ENCODE measurements at regions of chr19 and their contacts with region 1.

Region 1: DNA sequence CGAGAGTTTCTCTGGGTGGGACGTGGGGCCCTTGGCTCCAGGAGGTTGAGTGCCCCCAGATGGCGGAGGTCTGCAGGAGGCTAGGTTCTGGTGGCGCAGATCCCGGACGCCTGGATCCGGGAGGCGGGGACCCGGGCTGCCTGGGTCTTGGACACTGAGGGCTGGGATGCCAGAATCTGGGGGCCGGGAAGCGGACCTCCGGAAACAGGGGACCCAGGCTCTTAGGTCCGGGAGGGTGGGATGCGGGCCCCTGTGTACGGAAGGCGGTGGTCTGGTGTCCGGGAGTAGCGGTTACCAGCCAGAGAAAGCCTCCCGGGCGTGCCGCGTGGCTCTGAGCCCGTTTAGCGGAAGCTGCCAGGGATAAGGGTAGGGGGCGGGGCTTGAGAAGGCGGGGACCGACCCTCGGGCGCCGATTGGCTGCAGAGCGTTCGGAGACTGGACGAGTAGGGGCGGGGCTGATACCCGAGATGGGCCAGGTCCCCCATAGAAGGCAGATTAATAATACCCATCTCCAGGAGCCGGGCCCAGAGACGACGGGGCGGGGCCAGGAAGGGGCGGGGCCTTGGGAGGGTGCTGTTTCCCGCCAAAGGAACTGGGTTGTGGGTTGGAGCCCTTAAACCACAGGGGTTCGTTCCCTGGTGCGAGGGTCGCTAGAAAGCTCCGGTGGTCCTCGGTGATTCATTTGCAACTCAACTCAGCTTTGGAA is at the start of gene SLC1A5:
- DNase-seq: peak; percentile 99
- ATAC-seq: peak; percentile 83
- H3K4me3 Mint-ChIP-seq: peak within 1 kb of the TSS; percentile 98
- H3K27ac Mint-ChIP-seq: peak within 1 kb of the TSS; percentile 98
- H3K4me1 Mint-ChIP-seq: peaks cover 29% of the 10 kb centered on the region
- H3K27me3 Mint-ChIP-seq: no peaks in the 10 kb centered on the region
- CTCF ChIP-seq: no peak
- total RNA-seq, gene SLC1A5: 235 TPM

Region 2: DNA sequence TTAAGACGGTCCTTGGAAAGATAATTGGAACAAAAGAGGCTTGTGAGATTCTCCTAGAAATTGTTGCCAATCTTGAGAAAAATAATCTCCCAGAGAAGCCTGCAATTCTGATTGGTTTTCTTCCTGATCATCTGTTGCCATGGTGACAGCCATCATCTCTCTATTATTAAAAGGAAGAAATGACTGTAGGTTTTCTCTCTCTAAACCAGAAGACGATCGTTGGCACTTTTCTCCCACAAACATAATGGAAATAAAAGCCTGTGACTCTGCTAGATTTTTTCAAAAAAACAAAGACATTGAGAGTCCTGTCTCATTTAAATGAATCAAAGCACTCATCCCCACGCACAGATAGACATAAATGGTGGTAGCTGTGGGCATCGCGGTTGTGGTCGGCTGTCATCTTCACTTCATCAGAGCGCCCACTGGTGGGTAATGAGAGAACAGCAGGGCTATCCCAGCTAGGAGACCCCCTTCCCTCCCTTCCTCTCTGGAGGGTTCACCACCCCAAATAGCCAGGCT is 209.0 kb before region 1 on chr19:
- CTCF ChIA-PET with region 1: no interaction called
- POLR2A ChIA-PET with region 1: no interaction called
- intact Hi-C with region 1: no loop called
- DNase-seq: peak; percentile 76
- ATAC-seq: peak; percentile 47
- H3K4me3 Mint-ChIP-seq: no peak overlapping the region
- H3K27ac Mint-ChIP-seq: no peak overlapping the region
- H3K4me1 Mint-ChIP-seq: peaks cover 18% of the 10 kb centered on the region
- H3K27me3 Mint-ChIP-seq: no peaks in the 10 kb centered on the region
- CTCF ChIP-seq: peak; percentile 56

Region 3: GRCh38 chr19:46717034-46717723 is 71.2 kb before region 1 on chr19 and contains the start of gene PRKD2:
- CTCF ChIA-PET with region 1: no interaction called
- POLR2A ChIA-PET with region 1: interaction called, 27 read pairs
- intact Hi-C with region 1: no loop called
- DNase-seq: peak; percentile 92
- ATAC-seq: peak; percentile 62
- H3K4me3 Mint-ChIP-seq: peak within 1 kb of the TSS; percentile 86
- H3K27ac Mint-ChIP-seq: peak within 1 kb of the TSS; percentile 94
- H3K4me1 Mint-ChIP-seq: peaks cover 38% of the 10 kb centered on the region
- H3K27me3 Mint-ChIP-seq: no peaks in the 10 kb centered on the region
- CTCF ChIP-seq: no peak
- total RNA-seq, gene PRKD2: 81.1 to 86.0 TPM

Region 4: DNA sequence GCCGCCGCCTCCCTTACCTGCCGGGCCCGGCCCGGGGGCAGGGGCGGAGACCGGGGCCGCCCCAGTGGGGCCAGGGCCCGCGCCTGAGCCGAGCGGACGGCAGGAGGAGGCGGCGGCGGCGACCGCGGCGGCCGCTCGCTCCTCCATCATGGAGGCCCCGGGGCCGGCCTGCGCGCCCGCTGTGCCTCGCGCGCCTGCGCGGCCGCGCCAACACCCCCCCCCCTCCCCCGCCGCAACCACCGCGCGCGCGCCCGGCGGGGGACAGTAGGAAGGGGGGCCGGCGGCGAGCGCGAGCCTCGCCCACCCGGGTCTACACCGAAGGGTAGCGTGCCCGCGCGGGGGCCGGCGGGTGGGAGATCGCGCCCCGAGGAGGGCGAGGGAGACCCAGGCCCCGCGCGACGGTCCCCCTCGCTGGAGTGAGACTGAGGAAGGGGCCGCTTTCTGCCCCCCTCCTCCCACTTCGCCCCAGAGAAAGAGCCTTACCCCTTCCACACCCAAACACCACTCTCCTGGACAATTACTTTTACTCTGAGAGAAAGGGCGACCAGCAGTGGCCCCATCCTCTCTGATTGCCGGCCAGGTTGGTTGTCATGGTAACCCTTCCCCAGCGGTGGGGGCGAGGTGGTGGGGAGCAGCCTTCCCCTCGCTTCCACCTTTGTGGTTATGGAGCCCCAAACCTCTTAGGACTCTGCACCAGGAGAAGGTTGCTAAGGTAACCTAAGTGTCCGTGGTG is 42.0 kb before region 1 on chr19 and contains the start of gene STRN4:
- CTCF ChIA-PET with region 1: interaction called, 12 read pairs
- POLR2A ChIA-PET with region 1: interaction called, 4 read pairs
- intact Hi-C with region 1: no loop called
- DNase-seq: peak; percentile 63
- ATAC-seq: peak; percentile 81
- H3K4me3 Mint-ChIP-seq: peak within 1 kb of the TSS; percentile 91
- H3K27ac Mint-ChIP-seq: peak within 1 kb of the TSS; percentile 88
- H3K4me1 Mint-ChIP-seq: peaks cover 47% of the 10 kb centered on the region
- H3K27me3 Mint-ChIP-seq: no peaks in the 10 kb centered on the region
- CTCF ChIP-seq: no peak
- total RNA-seq, gene STRN4: 52.5 to 63.5 TPM

Region 5: DNA sequence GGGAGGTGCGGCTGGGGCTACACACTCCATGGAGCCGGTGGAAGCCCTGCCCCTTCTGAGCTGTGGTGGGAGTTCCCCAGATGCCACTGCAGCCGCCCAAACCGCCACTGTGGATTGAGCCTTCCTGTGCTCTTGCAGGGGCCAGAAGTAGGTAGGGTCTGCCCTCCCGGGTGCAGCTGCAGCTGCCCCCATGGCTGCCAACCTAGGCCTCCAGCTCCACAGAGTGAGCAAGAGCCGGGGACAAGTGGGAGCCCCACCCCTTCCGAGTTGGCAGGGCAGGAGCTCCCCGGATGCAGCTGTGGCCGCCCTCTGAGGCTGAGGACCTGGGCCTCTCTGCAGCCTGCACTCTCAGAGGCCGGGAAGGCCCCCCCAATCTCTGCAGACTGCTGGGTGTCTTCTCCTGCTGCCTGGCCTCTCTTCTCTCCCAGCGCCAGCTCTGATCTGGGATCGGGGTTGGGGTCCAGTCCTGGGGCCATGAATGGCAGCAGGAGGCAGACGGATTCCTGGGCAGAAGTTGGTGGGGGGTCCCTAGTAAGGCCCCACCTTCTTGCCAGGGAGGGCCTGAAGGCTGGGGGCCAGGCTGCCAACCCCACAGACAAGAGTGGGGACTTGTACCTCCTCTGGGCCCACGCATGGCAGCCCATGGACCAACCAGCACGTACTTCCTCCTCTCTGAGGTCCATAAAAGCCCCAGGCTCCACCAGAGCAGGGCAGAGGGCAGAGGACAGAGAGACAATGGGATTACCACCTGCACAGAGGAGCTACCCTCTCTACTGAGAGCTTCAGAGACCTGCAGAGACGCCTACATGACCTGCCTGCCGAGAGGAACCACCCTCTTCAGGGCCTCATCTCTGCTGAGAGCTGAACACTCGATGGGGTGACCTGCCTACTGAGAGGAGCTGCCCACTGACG is 33.3 kb after region 1 on chr19:
- CTCF ChIA-PET with region 1: interaction called, 10 read pairs
- POLR2A ChIA-PET with region 1: interaction called, 47 read pairs
- intact Hi-C with region 1: no loop called
- DNase-seq: peak; percentile 80
- ATAC-seq: peak; percentile 85
- H3K4me3 Mint-ChIP-seq: peak overlapping the region; percentile 25
- H3K27ac Mint-ChIP-seq: peak overlapping the region; percentile 74
- H3K4me1 Mint-ChIP-seq: peaks cover 41% of the 10 kb centered on the region
- H3K27me3 Mint-ChIP-seq: no peaks in the 10 kb centered on the region
- CTCF ChIP-seq: no peak

Measured in activated CD8-positive, alpha-beta T cell treated with anti-CD3 and anti-CD28 coated beads for 36 hours (primary cell).